Naive thymus-derived CD4-positive, alpha-beta T cell (primary cell): ENCODE measurements at regions of chr15 and their contacts with region 1.

Region 1: DNA sequence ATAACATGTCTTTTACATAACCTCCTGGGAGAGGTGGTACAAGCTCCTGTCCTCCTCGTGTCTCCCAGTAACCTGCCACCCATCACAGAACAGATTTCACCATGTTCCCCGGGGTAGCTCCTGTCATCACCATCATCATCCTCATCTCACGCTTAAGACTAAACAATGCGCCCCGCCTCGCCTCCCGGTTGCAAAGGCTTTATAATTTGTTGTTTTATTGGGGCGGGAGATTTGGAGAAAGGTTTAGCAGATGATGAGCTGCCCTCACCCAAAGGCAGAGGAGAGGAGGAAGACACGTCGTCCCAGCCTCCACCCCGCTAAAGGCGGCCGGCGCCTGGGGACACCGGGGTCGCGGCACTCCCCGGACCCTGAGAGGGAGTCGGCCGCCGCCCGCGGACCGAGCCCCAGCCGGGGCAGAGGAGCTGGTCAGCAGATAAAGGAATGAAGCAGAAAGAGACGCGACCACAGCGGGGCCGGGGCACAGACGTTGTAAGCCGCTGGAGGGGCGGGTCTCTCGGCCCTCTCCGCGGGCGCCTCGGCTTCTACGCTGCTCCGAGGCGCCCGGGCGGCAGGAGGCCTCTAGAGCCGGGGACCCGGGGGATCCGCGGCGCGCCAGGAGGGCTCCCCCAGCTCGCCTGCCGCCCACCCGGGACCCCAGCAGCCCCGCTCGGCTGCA is 589 bp downstream of the HERC1 start:
- DNase-seq: peak; percentile 11 to 55 (median 38)
- ATAC-seq: peak; percentile 48
- H3K4me3 ChIP-seq: peak overlapping the region; percentile 68
- H3K4me3 Mint-ChIP-seq: peak overlapping the region; percentile 86 to 98 (median 94)
- H3K27ac ChIP-seq: peak overlapping the region; percentile 99
- H3K27ac Mint-ChIP-seq: peak overlapping the region; percentile 94 to 99 (median 97)
- H3K4me1 ChIP-seq: peaks cover 30 to 31% of the 10 kb centered on the region in 2 donors
- H3K4me1 Mint-ChIP-seq: peaks cover 46 to 66% (median 56%) of the 10 kb centered on the region in 7 donors
- H3K27me3 ChIP-seq: no peaks in the 10 kb centered on the region
- H3K27me3 Mint-ChIP-seq: peaks cover 0 to 9% (median 0%) of the 10 kb centered on the region in 5 donors

Region 2: GRCh38 chr15:63805993-63806980 is 26.9 kb before region 1 on chr15:
- CTCF ChIA-PET with region 1: no interaction called
- POLR2A ChIA-PET with region 1: interaction called, 10 read pairs
- intact Hi-C with region 1: no loop called
- DNase-seq: peak in 5 of 9 donors; percentile 17 to 36 (median 21)
- ATAC-seq: peak; percentile 61
- H3K4me3 ChIP-seq: no peak overlapping the region
- H3K4me3 Mint-ChIP-seq: peak overlapping the region; percentile 4 to 74 (median 62)
- H3K27ac ChIP-seq: peak overlapping the region; percentile 51
- H3K27ac Mint-ChIP-seq: peak overlapping the region; percentile 61 to 92 (median 81)
- H3K4me1 ChIP-seq: peaks cover 13 to 46% of the 10 kb centered on the region in 2 donors
- H3K4me1 Mint-ChIP-seq: peaks cover 60 to 99% (median 95%) of the 10 kb centered on the region in 7 donors
- H3K27me3 ChIP-seq: no peaks in the 10 kb centered on the region
- H3K27me3 Mint-ChIP-seq: no peaks in the 10 kb centered on the region

Region 3: GRCh38 chr15:63849906-63850305 is 16.7 kb after region 1 on chr15:
- CTCF ChIA-PET with region 1: no interaction called
- POLR2A ChIA-PET with region 1: interaction called, 12 read pairs
- intact Hi-C with region 1: no loop called
- DNase-seq: no peak
- ATAC-seq: no peak
- H3K4me3 ChIP-seq: no peak overlapping the region
- H3K4me3 Mint-ChIP-seq: no peak overlapping the region
- H3K27ac ChIP-seq: no peak overlapping the region
- H3K27ac Mint-ChIP-seq: no peak overlapping the region
- H3K4me1 ChIP-seq: peaks cover 0 to 4% of the 10 kb centered on the region in 2 donors
- H3K4me1 Mint-ChIP-seq: peaks cover 3 to 35% (median 17%) of the 10 kb centered on the region in 7 donors
- H3K27me3 ChIP-seq: no peaks in the 10 kb centered on the region
- H3K27me3 Mint-ChIP-seq: no peaks in the 10 kb centered on the region

Region 4: DNA sequence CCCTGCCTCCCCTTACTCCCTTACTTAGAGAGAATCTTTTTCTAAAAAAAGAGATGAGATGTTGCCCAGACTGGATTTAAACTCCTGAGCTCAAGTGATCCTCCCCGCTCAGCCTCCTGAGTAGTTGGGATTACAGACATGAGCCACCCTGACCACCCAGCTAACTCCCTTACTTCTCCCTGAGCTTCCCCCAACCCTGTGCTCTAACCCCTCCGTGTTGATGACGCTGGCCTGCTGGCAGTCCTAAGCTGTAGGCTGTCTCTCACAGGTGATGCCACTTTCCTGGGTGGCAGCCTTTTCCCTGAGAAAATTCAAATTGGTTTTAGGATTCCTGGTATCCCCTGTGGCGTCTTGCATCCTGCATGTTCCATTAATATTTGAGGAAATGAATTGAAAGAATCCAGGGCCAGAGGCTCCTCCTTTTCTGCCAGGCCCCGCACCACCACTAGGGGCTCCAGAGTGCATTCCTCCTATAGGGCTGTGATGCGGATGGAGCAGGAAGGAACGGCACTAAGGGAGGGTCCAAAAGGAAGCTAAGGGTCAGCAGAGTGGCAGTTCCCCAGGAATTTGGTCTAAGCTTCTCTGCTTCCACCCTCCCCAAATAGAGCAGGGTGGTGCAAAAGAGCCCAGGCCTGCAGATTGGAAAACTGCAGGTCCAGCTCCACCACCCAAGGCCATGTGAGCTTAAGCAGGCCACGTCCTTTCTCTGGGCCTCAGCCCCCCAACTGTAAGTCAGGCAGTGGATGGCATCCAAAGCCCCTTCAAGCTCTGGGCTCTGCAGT is 112.0 kb after region 1 on chr15:
- CTCF ChIA-PET with region 1: no interaction called
- POLR2A ChIA-PET with region 1: no interaction called
- intact Hi-C with region 1: loop called in 1 of 2 experiments (anchors 1 kb)
- DNase-seq: peak; percentile 21 to 68 (median 48)
- ATAC-seq: peak; percentile 94
- H3K4me3 ChIP-seq: no peak overlapping the region
- H3K4me3 Mint-ChIP-seq: no peak overlapping the region
- H3K27ac ChIP-seq: no peak overlapping the region
- H3K27ac Mint-ChIP-seq: peak overlapping the region in 5 of 9 donors; percentile 5 to 75 (median 15)
- H3K4me1 ChIP-seq: peaks cover 0 to 6% of the 10 kb centered on the region in 2 donors
- H3K4me1 Mint-ChIP-seq: peaks cover 1 to 33% (median 6%) of the 10 kb centered on the region in 7 donors
- H3K27me3 ChIP-seq: no peaks in the 10 kb centered on the region
- H3K27me3 Mint-ChIP-seq: no peaks in the 10 kb centered on the region

Region 5: DNA sequence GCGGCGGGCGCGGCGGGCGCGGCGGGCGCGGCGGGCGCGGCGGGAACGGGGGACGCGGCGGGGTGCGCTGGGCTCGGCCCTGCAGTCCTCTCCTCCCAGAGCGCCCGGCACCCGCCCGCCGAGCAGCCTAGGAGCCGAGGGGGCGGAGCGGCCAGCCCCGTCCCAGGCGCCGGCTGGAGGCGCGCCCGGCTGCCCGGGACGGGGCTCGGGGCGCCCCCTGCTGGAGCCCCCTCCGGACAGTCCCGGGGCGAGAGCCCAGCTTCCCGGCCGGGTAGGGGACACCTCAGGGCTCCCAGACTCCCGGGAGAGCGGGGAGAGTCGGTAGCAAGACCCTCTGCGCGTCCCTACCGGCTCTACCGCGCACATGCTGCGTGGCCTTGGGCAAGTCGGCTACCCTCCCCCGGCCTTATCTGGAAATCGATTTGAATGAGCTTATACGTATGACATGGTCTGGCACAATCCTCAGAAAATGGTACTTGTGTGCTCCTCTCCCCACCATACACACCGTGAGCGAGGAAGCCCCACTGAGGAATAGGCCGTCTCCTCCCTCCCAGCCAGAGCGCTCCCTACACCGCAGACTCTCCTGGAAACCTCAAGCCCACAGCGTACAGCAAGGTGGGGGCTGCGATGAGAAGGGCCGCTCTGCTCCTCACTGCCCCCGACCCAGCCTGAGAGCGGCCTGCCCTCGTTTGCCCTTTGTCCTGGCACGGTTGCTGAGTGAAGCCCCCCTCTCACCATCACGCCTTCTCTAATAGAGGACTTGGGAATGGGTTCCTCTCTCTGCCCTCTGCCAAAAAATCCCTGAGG is 213.4 kb after region 1 on chr15 and contains the start of gene DAPK2:
- CTCF ChIA-PET with region 1: no interaction called
- POLR2A ChIA-PET with region 1: no interaction called
- intact Hi-C with region 1: loop called in 1 of 2 experiments (anchors 5 kb)
- DNase-seq: peak; percentile 29 to 83 (median 63)
- ATAC-seq: peak; percentile 91
- H3K4me3 ChIP-seq: peak within 1 kb of the TSS; percentile 55
- H3K4me3 Mint-ChIP-seq: peak within 1 kb of the TSS; percentile 74 to 85 (median 82)
- H3K27ac ChIP-seq: no peak within 1 kb of the TSS
- H3K27ac Mint-ChIP-seq: peak within 1 kb of the TSS in 5 of 9 donors; percentile 28 to 88 (median 61)
- H3K4me1 ChIP-seq: peaks cover 0 to 5% of the 10 kb centered on the region in 2 donors
- H3K4me1 Mint-ChIP-seq: peaks cover 5 to 30% (median 10%) of the 10 kb centered on the region in 7 donors
- H3K27me3 ChIP-seq: no peaks in the 10 kb centered on the region
- H3K27me3 Mint-ChIP-seq: peaks cover 4 to 41% (median 13%) of the 10 kb centered on the region in 5 donors
- total RNA-seq, gene DAPK2: 0.46 to 9.3 (median 4.2) TPM in 4 of 5 experiments, not detected in the other